Activated CD4-positive, alpha-beta memory T cell treated with anti-CD3 and anti-CD28 coated beads, Interleukin-2, amount 10 ng/mL, durations not matched to agents 7 days and 5 days (primary cell): ENCODE measurements at regions of chr15 and their contacts with region 1.

Region 1: GRCh38 chr15:81265944-81266775 is 57.8 kb downstream of the STARD5 start:
- DNase-seq: peak; percentile 87
- H3K4me3 Mint-ChIP-seq: peak overlapping the region; percentile 47
- H3K27ac Mint-ChIP-seq: peak overlapping the region; percentile 45
- H3K4me1 Mint-ChIP-seq: peaks cover 25% of the 10 kb centered on the region
- H3K27me3 Mint-ChIP-seq: peaks cover 12% of the 10 kb centered on the region

Region 2: DNA sequence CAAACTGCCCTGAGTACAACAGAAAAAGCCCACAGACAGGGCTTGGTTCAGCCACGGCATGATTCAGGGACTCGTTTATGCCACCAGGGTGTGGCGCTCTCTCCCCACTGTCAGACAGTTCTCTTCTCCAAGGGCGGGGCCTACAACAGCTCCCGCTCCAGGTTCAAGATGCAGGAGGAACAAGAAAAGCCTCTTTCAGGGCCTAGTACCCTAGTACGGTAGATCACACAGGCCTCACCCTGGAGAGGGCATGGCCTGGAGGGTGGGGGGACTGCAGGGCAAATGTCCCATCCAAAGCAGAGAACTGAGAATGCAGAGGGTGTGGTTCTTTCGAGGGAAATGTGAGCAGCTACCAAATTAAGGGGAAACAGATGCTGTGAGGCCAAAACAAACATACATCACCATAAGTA is 288.5 kb before region 1 on chr15:
- CTCF ChIA-PET with region 1: interaction called, 48 read pairs
- POLR2A ChIA-PET with region 1: no interaction called
- DNase-seq: peak; percentile 50
- H3K4me3 Mint-ChIP-seq: no peak overlapping the region
- H3K27ac Mint-ChIP-seq: peak overlapping the region; percentile 32
- H3K4me1 Mint-ChIP-seq: peaks cover 61% of the 10 kb centered on the region
- H3K27me3 Mint-ChIP-seq: no peaks in the 10 kb centered on the region

Region 3: GRCh38 chr15:81117136-81117535 is 149.0 kb before region 1 on chr15:
- CTCF ChIA-PET with region 1: interaction called, 296 read pairs
- POLR2A ChIA-PET with region 1: no interaction called
- DNase-seq: no peak
- H3K4me3 Mint-ChIP-seq: no peak overlapping the region
- H3K27ac Mint-ChIP-seq: no peak overlapping the region
- H3K4me1 Mint-ChIP-seq: peaks cover 6% of the 10 kb centered on the region
- H3K27me3 Mint-ChIP-seq: peaks cover 59% of the 10 kb centered on the region

Region 4: GRCh38 chr15:81174792-81175327 is 91.3 kb before region 1 on chr15:
- CTCF ChIA-PET with region 1: interaction called, 43 read pairs
- POLR2A ChIA-PET with region 1: no interaction called
- DNase-seq: no peak
- H3K4me3 Mint-ChIP-seq: no peak overlapping the region
- H3K27ac Mint-ChIP-seq: no peak overlapping the region
- H3K4me1 Mint-ChIP-seq: peaks cover 2% of the 10 kb centered on the region
- H3K27me3 Mint-ChIP-seq: peaks cover 34% of the 10 kb centered on the region

Region 5: DNA sequence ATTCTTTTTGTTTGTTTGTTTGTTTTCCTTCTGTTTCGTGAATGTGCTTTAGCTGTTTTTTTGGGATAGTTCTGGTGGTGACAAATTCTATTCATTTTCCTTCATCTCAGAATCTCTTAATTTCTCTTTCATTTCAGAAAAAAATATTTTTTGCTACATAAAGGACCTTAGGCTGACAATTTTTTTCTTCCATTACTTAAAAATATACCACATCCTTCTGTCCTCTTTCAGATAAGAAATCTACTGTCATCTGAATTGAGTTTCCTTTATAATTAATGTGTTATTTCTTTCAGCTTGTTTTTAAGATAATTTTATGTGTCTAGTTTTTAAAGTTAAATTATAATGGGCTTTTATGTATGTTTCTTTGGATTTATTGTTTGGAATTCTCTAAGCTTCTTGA is 21.9 kb before region 1 on chr15:
- CTCF ChIA-PET with region 1: interaction called, 31 read pairs
- POLR2A ChIA-PET with region 1: no interaction called
- DNase-seq: no peak
- H3K4me3 Mint-ChIP-seq: no peak overlapping the region
- H3K27ac Mint-ChIP-seq: no peak overlapping the region
- H3K4me1 Mint-ChIP-seq: no peaks in the 10 kb centered on the region
- H3K27me3 Mint-ChIP-seq: peaks cover 29% of the 10 kb centered on the region

Region 6: GRCh38 chr15:81336568-81336967 is 70.4 kb after region 1 on chr15:
- CTCF ChIA-PET with region 1: interaction called, 26 read pairs
- POLR2A ChIA-PET with region 1: no interaction called
- DNase-seq: no peak
- H3K4me3 Mint-ChIP-seq: no peak overlapping the region
- H3K27ac Mint-ChIP-seq: no peak overlapping the region
- H3K4me1 Mint-ChIP-seq: no peaks in the 10 kb centered on the region
- H3K27me3 Mint-ChIP-seq: peaks cover 8% of the 10 kb centered on the region

Region 7: DNA sequence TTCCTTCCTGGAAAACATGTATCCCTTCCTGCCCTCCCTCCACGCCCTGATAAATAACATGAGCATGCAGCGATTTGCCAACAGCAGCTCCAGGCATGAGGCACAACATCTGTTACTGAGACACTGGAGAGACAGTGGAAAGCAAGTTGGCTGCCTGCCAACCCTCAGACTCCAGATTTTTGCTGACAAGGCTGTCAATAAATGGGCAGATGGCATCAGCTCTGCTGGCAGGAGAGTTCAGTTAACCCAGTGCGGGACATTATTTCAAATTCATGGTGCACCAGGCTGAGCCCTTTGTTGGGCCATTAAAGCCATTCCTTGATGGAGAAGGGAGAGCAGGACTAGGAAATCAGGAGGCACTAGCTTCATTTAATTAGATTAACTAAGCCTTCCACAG is 486.4 kb after region 1 on chr15:
- CTCF ChIA-PET with region 1: no interaction called
- POLR2A ChIA-PET with region 1: no interaction called
- DNase-seq: no peak
- H3K4me3 Mint-ChIP-seq: no peak overlapping the region
- H3K27ac Mint-ChIP-seq: no peak overlapping the region
- H3K4me1 Mint-ChIP-seq: no peaks in the 10 kb centered on the region
- H3K27me3 Mint-ChIP-seq: no peaks in the 10 kb centered on the region